ENCODE measurements at regions of chr17 and their contacts with region 1.

Region 1: GRCh38 chr17:35486920-35487732 is 38.6 kb upstream of the SLFN13 start:
- DNase-seq: peak; percentile 92
- ATAC-seq: peak; percentile 71
- H3K4me3 Mint-ChIP-seq: peak overlapping the region; percentile 82
- H3K27ac Mint-ChIP-seq: peak overlapping the region; percentile 91
- H3K4me1 Mint-ChIP-seq: peaks cover 36% of the 10 kb centered on the region
- H3K27me3 Mint-ChIP-seq: peaks cover 11% of the 10 kb centered on the region

Region 2: DNA sequence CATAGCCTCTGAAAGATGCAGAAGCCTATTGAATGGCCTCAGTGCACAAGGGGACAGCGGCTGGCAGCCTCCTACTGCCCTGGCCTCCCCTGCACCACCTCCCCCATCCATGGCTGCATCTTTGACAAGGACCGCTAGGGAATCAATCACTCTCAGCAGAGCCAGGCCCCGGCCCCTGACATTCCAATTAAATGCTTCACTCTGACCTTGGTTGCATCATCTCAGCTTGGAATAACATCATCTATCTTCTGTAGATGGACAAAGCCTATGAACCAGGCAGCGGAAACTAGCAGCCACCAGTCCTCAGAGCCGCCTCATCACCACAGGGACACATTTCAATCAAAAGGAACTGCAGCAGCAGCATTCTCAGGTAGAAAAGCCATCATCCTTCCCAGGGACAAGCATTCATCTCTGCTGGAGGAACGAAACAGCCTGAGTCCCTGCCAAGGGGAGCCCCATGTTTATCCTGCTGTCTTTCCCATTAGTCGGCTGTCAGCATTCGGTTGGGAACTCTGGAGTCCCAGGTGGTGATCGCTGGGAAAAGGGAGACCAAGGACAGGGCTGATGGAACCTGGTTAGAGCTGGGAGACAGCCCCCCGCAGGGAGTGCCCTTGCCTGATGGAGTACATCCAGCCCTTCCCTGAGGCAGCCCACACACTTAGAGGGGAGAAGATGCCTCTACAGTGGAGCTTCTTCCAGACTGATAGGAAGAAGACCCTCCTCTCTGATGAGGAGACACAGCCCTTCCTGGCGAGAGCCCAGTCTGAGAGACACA is 919.2 kb before region 1 on chr17:
- CTCF ChIA-PET with region 1: no interaction called
- POLR2A ChIA-PET with region 1: no interaction called
- intact Hi-C with region 1: no loop called
- DNase-seq: no peak
- ATAC-seq: no peak
- H3K4me3 Mint-ChIP-seq: no peak overlapping the region
- H3K27ac Mint-ChIP-seq: no peak overlapping the region
- H3K4me1 Mint-ChIP-seq: no peaks in the 10 kb centered on the region
- H3K27me3 Mint-ChIP-seq: peaks cover 31% of the 10 kb centered on the region

Region 3: GRCh38 chr17:35432176-35433074 is 54.7 kb before region 1 on chr17 and contains the start of gene SLFN12:
- CTCF ChIA-PET with region 1: no interaction called
- POLR2A ChIA-PET with region 1: interaction called, 4 read pairs
- intact Hi-C with region 1: loop called in 1 of 2 experiments (anchors 1 kb)
- DNase-seq: peak; percentile 63
- ATAC-seq: peak; percentile 83
- H3K4me3 Mint-ChIP-seq: peak within 1 kb of the TSS; percentile 90
- H3K27ac Mint-ChIP-seq: peak within 1 kb of the TSS; percentile 98
- H3K4me1 Mint-ChIP-seq: peaks cover 40% of the 10 kb centered on the region
- H3K27me3 Mint-ChIP-seq: no peaks in the 10 kb centered on the region
- total RNA-seq, gene SLFN12: 5.4 TPM

Region 4: DNA sequence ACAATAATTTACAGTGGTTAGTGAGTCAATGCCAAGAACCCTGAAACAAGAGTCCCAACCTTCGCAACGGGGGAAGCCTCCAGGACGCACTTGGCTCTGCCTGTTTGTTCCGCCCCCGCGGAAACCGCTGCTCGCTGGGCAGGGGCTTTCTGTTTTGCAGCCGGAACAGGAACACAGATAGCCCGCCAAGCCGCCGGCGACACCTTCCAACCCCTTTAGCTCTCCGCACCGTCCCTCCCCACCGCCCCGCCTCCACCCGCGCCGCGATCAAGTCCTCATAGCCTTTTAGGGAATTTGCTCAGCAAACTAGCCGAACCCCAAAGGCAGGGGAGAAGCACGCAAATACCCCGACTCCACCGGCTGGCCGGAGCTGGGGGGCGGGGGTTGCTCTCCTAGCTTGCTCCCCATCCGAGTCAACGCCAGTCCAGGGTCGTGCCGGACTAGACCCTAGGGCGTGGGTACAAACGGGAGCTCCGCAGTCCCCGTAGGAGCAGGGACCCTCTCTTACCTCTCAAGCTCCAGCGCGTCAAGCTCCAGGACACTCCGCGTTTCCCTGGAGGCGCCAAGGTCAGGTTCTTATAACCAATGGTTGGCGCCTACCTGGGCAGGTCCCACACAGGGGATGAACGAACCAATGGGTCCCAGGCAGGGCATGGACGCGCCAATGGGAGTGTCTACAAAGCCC is 38.8 kb before region 1 on chr17 and contains the start of gene SLFN13:
- CTCF ChIA-PET with region 1: interaction called, 3 read pairs
- POLR2A ChIA-PET with region 1: interaction called, 6 read pairs
- intact Hi-C with region 1: loop called (anchors 1 to 2 kb)
- DNase-seq: peak; percentile 97
- ATAC-seq: peak; percentile 97
- H3K4me3 Mint-ChIP-seq: peak within 1 kb of the TSS; percentile 46
- H3K27ac Mint-ChIP-seq: peak within 1 kb of the TSS; percentile 51
- H3K4me1 Mint-ChIP-seq: peaks cover 15% of the 10 kb centered on the region
- H3K27me3 Mint-ChIP-seq: no peaks in the 10 kb centered on the region
- total RNA-seq, gene SLFN13: 18.6 to 22.5 TPM

Region 5: GRCh38 chr17:37019117-37019740 is 1532.1 kb after region 1 on chr17:
- CTCF ChIA-PET with region 1: no interaction called
- POLR2A ChIA-PET with region 1: no interaction called
- intact Hi-C with region 1: no loop called
- DNase-seq: no peak
- ATAC-seq: no peak
- H3K4me3 Mint-ChIP-seq: no peak overlapping the region
- H3K27ac Mint-ChIP-seq: no peak overlapping the region
- H3K4me1 Mint-ChIP-seq: peaks cover 4% of the 10 kb centered on the region
- H3K27me3 Mint-ChIP-seq: no peaks in the 10 kb centered on the region